Endothelial cell of umbilical vein (primary cell): ENCODE measurements at regions of chr3 and their contacts with region 1.

Region 1: DNA sequence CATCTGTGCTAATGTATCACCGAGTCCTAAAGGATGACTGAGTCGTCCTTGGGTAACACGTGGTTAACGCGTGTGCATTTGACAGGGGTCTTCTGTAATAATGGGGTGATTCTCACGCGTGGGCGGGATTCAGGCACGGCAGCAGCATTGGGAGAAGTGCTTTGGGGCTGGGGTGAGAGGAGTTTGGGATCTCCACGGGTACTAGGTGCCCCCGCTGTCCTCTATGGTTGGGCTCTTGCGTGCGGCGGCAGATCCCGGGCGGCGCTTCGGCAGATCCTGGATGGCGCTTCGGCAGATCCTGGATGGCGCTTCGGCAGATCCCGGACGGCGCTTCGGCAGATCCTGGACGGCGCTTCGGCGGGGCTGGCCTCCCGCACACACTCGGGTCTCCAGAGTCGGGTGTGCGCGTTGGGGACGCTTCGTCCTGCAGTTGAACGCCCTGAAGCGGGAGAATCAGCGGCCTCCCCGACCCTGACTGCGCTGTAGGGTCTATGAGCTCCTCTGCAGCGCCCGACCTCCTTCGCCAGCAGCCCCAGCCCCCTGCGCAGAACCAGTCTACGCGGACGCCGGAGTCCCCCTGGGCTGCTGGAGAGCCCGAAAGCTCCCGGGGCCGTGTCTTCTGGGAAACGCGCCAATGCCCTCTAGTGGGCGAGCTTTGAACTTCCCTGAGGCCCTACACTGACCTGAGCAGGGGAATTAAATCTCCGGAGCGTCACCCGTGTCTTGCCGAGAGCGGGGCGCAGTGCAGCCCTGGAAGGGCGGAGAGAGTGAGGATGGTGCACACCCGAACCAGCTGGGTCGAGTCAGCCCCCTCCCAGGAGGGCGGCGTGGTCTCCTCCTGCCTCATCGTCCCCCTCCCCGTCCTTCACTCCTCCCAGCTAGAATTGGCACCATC is 48.1 kb upstream of the EPHB3 start:
- DNase-seq: peak; percentile 79
- H3K4me3 ChIP-seq: peak overlapping the region in 1 of 3 experiments; percentile 11
- H3K27ac ChIP-seq: no peak overlapping the region
- H3K4me1 ChIP-seq: peaks cover 5% of the 10 kb centered on the region
- H3K27me3 ChIP-seq: peaks cover 28 to 32% of the 10 kb centered on the region in 2 experiments
- CTCF ChIP-seq: peak; percentile 82 to 89
- POLR2A ChIP-seq: no peak

Region 2: GRCh38 chr3:184209146-184209923 is 304.2 kb before region 1 on chr3:
- CTCF ChIA-PET with region 1: no interaction called
- POLR2A ChIA-PET with region 1: no interaction called
- dilution Hi-C with region 1: no loop called
- intact Hi-C with region 1: no loop called
- DNase-seq: no peak
- H3K4me3 ChIP-seq: no peak overlapping the region
- H3K27ac ChIP-seq: no peak overlapping the region
- H3K4me1 ChIP-seq: no peaks in the 10 kb centered on the region
- H3K27me3 ChIP-seq: peaks cover 7 to 11% of the 10 kb centered on the region in 2 experiments
- CTCF ChIP-seq: no peak
- POLR2A ChIP-seq: no peak

Region 3: DNA sequence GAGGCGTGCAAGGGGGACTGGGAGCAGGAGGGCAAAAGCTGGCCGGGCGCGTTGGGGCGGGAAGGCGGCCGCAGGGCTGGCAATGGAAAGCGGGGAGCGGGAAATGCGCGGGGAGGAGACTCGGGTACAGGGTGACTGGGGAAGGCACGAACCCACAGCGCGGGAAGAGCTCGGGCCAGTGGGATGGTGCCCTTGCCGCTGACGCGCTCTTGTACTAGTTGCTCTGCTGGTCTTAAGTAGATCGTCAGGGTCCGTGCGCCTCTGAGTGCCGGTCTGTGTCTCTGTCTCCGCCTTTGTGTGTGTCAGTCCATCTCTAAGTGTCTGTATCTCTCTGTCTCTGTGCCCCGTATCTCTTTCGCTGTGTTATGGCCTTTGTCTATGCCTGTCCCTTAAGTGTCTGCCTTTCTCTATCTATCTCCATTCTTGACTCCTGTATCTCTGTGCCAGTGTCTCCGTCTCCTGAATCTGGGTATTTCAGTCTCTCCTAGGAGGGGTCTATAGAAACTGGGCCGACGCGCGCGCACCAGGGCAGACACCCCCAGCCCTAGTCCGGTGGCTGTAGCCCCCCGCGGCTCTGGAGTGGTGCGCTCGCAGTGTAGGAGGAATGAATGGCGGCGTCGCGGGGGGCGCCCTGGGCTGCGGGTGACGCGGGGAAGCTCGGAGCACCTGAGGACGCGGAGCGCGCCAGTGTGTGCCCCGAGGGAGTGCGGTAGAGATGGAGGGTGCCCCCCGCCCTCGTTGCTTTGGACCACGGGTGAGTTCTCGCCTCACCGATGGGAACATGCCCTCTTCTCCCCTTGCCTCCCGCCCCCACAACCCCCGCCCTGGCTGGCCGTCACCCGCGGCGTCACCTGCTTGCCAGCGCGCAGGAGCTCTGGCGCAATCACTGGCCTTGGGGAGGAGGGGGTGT is 251.4 kb before region 1 on chr3:
- CTCF ChIA-PET with region 1: no interaction called
- POLR2A ChIA-PET with region 1: no interaction called
- dilution Hi-C with region 1: no loop called
- intact Hi-C with region 1: no loop called
- DNase-seq: peak; percentile 20
- H3K4me3 ChIP-seq: peak overlapping the region in 2 of 3 experiments; percentile 24 to 28
- H3K27ac ChIP-seq: no peak overlapping the region
- H3K4me1 ChIP-seq: peaks cover 13% of the 10 kb centered on the region
- H3K27me3 ChIP-seq: peaks cover 26 to 36% of the 10 kb centered on the region in 2 experiments
- CTCF ChIP-seq: no peak
- POLR2A ChIP-seq: no peak

Region 4: DNA sequence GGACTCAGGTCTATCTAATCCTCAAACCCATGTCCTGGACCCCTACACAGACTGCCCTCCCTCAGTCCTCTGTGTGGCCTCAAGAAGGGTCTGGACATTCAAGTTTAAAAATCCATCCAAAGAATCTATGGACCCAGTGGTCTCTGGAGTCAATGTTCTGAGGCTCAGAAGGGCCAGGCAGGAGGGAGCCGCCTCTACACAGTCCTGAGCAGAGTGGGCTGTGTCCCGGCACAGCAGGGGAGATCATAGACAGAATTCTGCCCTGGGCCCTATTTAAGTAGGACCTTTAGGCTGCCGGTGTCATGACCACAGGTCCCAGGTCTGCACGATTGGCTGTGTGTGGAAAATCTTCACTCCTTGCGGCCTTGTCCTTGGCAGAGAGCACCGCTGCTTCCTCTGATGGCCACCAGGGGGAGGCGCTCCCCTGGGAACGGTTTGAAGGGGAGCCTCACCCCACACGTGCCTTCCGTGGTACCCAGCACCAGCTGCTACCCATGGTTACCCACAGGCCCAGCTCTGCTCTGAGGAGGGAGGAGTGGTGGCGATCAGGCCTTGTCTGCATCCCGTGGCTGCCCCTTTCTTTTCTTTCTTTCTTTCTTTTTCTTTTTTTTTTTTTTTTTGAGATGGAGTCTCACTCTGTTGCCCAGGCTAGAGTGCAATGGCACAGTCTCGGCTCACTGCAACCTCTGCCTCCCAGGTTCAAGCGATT is 95.8 kb before region 1 on chr3:
- CTCF ChIA-PET with region 1: interaction called, 109 read pairs
- POLR2A ChIA-PET with region 1: no interaction called
- dilution Hi-C with region 1: no loop called
- intact Hi-C with region 1: loop called (anchors 1 kb)
- DNase-seq: peak; percentile 62
- H3K4me3 ChIP-seq: no peak overlapping the region
- H3K27ac ChIP-seq: no peak overlapping the region
- H3K4me1 ChIP-seq: no peaks in the 10 kb centered on the region
- H3K27me3 ChIP-seq: no peaks in the 10 kb centered on the region
- CTCF ChIP-seq: peak; percentile 88 to 98
- POLR2A ChIP-seq: no peak

Region 5: GRCh38 chr3:184469423-184469822 is 44.1 kb before region 1 on chr3:
- CTCF ChIA-PET with region 1: interaction called, 107 read pairs
- POLR2A ChIA-PET with region 1: no interaction called
- dilution Hi-C with region 1: no loop called
- intact Hi-C with region 1: loop called (anchors 1 kb)
- DNase-seq: peak; percentile 42
- H3K4me3 ChIP-seq: no peak overlapping the region
- H3K27ac ChIP-seq: no peak overlapping the region
- H3K4me1 ChIP-seq: peaks cover 17% of the 10 kb centered on the region
- H3K27me3 ChIP-seq: peaks cover 2 to 16% of the 10 kb centered on the region in 2 experiments
- CTCF ChIP-seq: peak; percentile 75 to 76
- POLR2A ChIP-seq: no peak

Region 6: DNA sequence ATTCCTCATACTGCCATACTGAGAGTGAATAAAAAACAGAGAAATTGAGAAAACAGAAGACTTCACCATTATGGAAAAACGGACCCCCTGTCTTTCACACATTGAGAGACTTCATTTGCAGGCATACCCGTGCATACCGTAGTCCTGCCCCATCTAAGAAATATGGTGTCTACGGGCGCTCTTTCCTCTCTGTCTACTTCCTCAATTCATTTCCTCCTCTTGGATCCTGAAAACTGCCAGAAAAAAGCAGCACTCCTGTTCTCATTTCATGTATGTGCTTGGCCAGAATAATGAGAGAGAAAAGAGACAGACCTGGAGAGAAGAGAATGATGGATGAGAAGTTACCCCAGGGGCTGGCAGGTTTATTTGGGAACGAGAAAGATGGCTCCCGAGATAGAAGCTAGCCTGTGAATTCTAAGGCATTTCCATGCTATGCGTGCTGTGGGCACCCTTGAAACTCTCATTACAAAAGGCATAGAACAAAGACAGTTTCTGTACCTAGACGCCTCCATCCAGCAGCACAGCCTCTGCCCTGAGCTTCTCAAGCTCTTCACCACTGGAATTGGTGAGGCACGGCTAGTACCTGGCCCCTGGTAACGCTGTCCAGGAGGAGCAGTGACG is 14.4 kb before region 1 on chr3:
- CTCF ChIA-PET with region 1: interaction called, 17 read pairs
- POLR2A ChIA-PET with region 1: no interaction called
- dilution Hi-C with region 1: no loop called
- intact Hi-C with region 1: no loop called
- DNase-seq: no peak
- H3K4me3 ChIP-seq: no peak overlapping the region
- H3K27ac ChIP-seq: no peak overlapping the region
- H3K4me1 ChIP-seq: no peaks in the 10 kb centered on the region
- H3K27me3 ChIP-seq: peaks cover 7 to 29% of the 10 kb centered on the region in 2 experiments
- CTCF ChIP-seq: no peak
- POLR2A ChIP-seq: no peak

Region 7: GRCh38 chr3:184531626-184532280 is 18.2 kb after region 1 on chr3:
- CTCF ChIA-PET with region 1: interaction called, 32 read pairs
- POLR2A ChIA-PET with region 1: no interaction called
- dilution Hi-C with region 1: no loop called
- intact Hi-C with region 1: no loop called
- DNase-seq: peak; percentile 41
- H3K4me3 ChIP-seq: peak overlapping the region in 1 of 3 experiments; percentile 19
- H3K27ac ChIP-seq: no peak overlapping the region
- H3K4me1 ChIP-seq: peaks cover 10% of the 10 kb centered on the region
- H3K27me3 ChIP-seq: peaks cover 5 to 11% of the 10 kb centered on the region in 2 experiments
- CTCF ChIP-seq: no peak
- POLR2A ChIP-seq: no peak

Region 8: DNA sequence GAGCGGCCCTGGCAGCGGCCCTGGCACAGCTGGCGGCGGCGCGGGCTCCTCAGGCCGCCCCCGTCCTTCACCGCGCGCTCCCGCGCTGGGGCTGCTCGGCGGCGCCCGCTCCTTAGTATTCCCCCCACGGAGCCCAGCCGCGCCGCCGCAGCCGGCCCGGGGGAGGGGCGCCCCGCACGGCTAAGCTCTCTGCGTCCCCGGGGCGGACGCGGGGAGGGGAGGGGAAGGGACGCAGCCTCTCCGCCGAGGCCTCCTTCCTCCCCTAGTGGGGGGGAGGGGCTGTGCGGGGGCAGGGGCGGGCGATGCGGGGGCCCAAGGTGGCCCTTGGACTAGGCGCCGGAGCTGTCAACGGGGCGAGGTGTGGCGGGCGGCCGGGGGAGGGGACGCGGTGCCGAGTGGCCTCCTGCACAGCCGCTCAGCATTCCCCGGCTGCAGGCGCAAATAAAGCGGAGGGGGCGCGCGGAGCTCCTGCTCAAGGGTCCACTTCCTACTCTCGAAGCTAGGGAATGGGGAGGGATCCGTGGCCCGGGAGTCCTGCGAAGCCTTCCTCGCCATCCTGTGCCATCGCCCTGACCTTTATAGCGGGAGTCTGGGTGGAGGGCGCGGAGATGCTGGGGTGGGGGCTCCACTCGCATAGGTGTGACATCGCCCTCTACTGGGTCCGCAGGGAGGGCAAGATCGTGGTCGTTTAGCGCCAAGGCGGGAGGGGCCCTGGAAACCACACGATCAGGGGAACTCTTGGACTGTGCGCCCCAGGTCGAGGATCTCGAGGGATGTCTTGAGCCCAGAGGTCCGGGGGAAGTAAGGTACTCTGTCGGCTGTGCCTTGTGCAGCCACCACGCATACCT is 70.3 kb after region 1 on chr3:
- CTCF ChIA-PET with region 1: no interaction called
- POLR2A ChIA-PET with region 1: no interaction called
- dilution Hi-C with region 1: no loop called
- intact Hi-C with region 1: no loop called
- DNase-seq: no peak
- H3K4me3 ChIP-seq: peak overlapping the region in 1 of 3 experiments; percentile 23
- H3K27ac ChIP-seq: no peak overlapping the region
- H3K4me1 ChIP-seq: peaks cover 5% of the 10 kb centered on the region
- H3K27me3 ChIP-seq: peaks cover 18 to 32% of the 10 kb centered on the region in 2 experiments
- CTCF ChIP-seq: peak; percentile 17 to 23
- POLR2A ChIP-seq: no peak

Region 9: GRCh38 chr3:184656829-184657681 is 143.5 kb after region 1 on chr3:
- CTCF ChIA-PET with region 1: no interaction called
- POLR2A ChIA-PET with region 1: no interaction called
- dilution Hi-C with region 1: no loop called
- intact Hi-C with region 1: no loop called
- DNase-seq: no peak
- H3K4me3 ChIP-seq: no peak overlapping the region
- H3K27ac ChIP-seq: no peak overlapping the region
- H3K4me1 ChIP-seq: no peaks in the 10 kb centered on the region
- H3K27me3 ChIP-seq: no peaks in the 10 kb centered on the region
- CTCF ChIP-seq: no peak
- POLR2A ChIP-seq: no peak